Panc1 (cell line): ENCODE measurements at regions of chr17 and their contacts with region 1.

Region 1: GRCh38 chr17:70767102-70767701 is 597.9 kb downstream of the KCNJ2 start:
- DNase-seq: no peak
- ATAC-seq: no peak
- H3K4me3 ChIP-seq: no peak overlapping the region
- H3K27ac ChIP-seq: no peak overlapping the region
- H3K4me1 ChIP-seq: no peaks in the 10 kb centered on the region
- H3K27me3 ChIP-seq: peaks cover 2% of the 10 kb centered on the region; the same call in 1 of the 2 replicates
- CTCF ChIP-seq: peak; percentile 77; the same call in 1 of the 2 replicates

Region 2: DNA sequence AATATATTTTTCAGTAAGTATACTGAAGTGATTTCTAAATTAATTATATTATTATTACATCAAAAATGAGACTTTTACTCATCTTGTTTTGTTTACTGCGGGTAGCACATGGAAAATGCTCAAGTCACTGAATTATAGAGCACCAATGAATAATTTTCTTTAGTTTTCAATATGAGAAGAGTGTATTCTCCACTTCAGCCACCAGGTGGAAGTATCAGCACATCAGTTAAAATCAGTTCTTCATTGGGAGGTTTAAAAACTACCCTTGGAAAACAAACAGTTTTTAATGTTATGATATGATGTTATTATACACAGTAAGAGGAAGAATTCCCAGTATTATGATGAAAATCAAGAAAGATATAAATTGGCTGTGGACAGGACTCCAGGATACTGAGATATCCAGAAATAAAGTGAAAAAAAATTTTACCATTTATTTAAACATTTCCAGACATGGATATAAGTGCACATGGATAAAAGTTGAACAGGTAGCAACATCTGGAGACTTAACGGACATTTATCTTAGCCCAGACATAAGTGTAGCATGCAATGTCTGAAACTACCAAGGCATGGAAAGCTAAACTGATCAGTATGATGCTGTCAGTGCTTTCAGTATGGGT is 130.6 kb before region 1 on chr17:
- CTCF ChIA-PET with region 1: no interaction called
- POLR2A ChIA-PET with region 1: no interaction called
- in situ Hi-C with region 1: no loop called
- intact Hi-C with region 1: loop called (anchors 5 kb)
- DNase-seq: peak; percentile 25
- ATAC-seq: no peak
- H3K4me3 ChIP-seq: no peak overlapping the region
- H3K27ac ChIP-seq: no peak overlapping the region
- H3K4me1 ChIP-seq: no peaks in the 10 kb centered on the region
- H3K27me3 ChIP-seq: peaks cover 12% of the 10 kb centered on the region; the same call in 1 of the 2 replicates
- CTCF ChIP-seq: peak; percentile 70; the same call in 1 of the 2 replicates

Region 3: GRCh38 chr17:70752972-70753467 is 14.2 kb before region 1 on chr17:
- CTCF ChIA-PET with region 1: no interaction called
- POLR2A ChIA-PET with region 1: no interaction called
- in situ Hi-C with region 1: no loop called
- intact Hi-C with region 1: no loop called
- DNase-seq: no peak
- ATAC-seq: no peak
- H3K4me3 ChIP-seq: no peak overlapping the region
- H3K27ac ChIP-seq: no peak overlapping the region
- H3K4me1 ChIP-seq: no peaks in the 10 kb centered on the region
- H3K27me3 ChIP-seq: 0 out of 2 replicates have a peak, but pooled peaks cover 3% of the 10 kb centered on the region
- CTCF ChIP-seq: no peak

Region 4: DNA sequence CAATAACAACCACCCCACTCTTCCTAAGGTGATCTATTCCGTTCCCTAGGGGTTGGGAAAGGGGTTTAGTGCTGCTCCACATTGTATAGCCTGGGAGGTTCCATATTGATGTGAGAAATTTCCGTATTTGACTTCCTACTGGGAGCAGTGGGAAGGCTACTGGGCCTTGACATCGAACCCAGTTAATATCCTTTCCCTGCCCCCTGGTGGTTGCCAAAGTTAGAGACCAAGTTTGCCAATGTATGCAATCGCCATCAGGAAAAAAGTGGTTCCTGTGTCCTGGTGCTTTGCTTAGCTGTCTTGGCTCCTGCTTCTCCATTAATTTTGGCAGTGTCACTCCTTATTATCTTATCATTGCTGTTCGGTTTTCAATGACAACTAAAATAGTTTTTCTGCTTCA is 317.0 kb after region 1 on chr17:
- CTCF ChIA-PET with region 1: no interaction called
- POLR2A ChIA-PET with region 1: no interaction called
- in situ Hi-C with region 1: no loop called
- intact Hi-C with region 1: loop called (anchors 1 kb)
- DNase-seq: no peak
- ATAC-seq: peak; percentile 60
- H3K4me3 ChIP-seq: no peak overlapping the region
- H3K27ac ChIP-seq: no peak overlapping the region
- H3K4me1 ChIP-seq: no peaks in the 10 kb centered on the region
- H3K27me3 ChIP-seq: no peaks in the 10 kb centered on the region
- CTCF ChIP-seq: peak; percentile 72

Region 5: DNA sequence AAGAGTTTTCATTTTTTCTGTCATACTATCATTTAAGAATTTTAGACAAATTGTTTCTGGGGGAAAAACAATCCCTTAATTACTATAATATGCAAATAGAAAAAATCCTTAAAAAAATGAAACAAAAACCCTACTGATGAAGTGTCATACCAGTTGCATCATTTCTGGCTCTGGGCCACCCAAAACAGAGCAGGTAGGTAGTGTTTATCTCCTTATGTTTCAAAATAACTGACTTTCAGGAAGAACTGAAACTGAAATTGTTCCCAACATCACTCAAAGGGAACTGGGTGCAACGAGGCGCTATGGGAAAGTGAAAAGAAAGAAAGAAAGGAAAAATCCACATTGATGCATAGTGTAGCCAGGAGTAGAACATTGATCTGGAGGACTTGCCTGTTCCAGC is 700.5 kb after region 1 on chr17:
- CTCF ChIA-PET with region 1: no interaction called
- POLR2A ChIA-PET with region 1: no interaction called
- in situ Hi-C with region 1: no loop called
- intact Hi-C with region 1: loop called (anchors 5 kb)
- DNase-seq: no peak
- ATAC-seq: no peak
- H3K4me3 ChIP-seq: no peak overlapping the region
- H3K27ac ChIP-seq: no peak overlapping the region
- H3K4me1 ChIP-seq: no peaks in the 10 kb centered on the region
- H3K27me3 ChIP-seq: no peaks in the 10 kb centered on the region
- CTCF ChIP-seq: no peak

Region 6: GRCh38 chr17:71496552-71496951 is 729.4 kb after region 1 on chr17:
- CTCF ChIA-PET with region 1: no interaction called
- POLR2A ChIA-PET with region 1: no interaction called
- in situ Hi-C with region 1: no loop called
- intact Hi-C with region 1: no loop called
- DNase-seq: no peak
- ATAC-seq: no peak
- H3K4me3 ChIP-seq: no peak overlapping the region
- H3K27ac ChIP-seq: no peak overlapping the region
- H3K4me1 ChIP-seq: no peaks in the 10 kb centered on the region
- H3K27me3 ChIP-seq: no peaks in the 10 kb centered on the region
- CTCF ChIP-seq: no peak